ENCODE measurements at regions of chr18 and their contacts with region 1.

Region 1: GRCh38 chr18:6920099-6920899 is 190.8 kb downstream of the ARHGAP28 start:
- DNase-seq: peak; percentile 60
- ATAC-seq: no peak
- H3K4me3 Mint-ChIP-seq: peak overlapping the region; percentile 15
- H3K27ac Mint-ChIP-seq: peak overlapping the region; percentile 22
- H3K4me1 Mint-ChIP-seq: no peaks in the 10 kb centered on the region
- H3K27me3 Mint-ChIP-seq: peaks cover 2% of the 10 kb centered on the region
- CTCF ChIP-seq: peak; percentile 43

Region 2: DNA sequence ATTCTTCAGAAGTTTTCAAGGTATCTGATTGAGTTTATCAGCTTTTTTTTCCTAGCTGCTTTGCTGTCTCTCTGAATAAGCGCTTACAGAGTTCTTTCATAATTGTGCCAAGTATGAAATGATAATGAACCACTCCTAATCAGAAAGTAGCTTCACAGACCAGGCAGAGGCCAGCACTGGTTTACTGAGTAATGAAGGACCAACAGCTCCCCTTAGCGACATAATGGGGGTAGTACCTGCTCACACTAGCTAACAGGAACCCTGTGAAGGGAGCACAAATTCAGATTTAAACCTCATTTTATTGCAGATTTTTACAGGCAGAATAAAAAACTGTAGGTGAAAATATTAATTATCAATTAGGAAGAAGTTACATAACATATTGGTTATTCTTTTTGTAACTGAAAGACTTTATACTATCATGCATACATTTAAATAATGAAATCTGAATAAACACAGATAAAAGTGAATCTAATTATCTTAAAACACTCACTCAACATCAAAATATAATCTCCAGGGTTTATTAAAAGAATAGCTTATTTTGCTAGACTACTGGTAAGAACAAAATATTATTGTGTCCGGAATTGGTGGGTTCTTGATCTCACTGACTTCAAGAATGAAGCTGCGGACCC is 256.9 kb after region 1 on chr18:
- CTCF ChIA-PET with region 1: interaction called, 9 read pairs
- POLR2A ChIA-PET with region 1: no interaction called
- intact Hi-C with region 1: loop called (anchors 5 kb)
- DNase-seq: peak; percentile 40
- ATAC-seq: no peak
- H3K4me3 Mint-ChIP-seq: no peak overlapping the region
- H3K27ac Mint-ChIP-seq: no peak overlapping the region
- H3K4me1 Mint-ChIP-seq: no peaks in the 10 kb centered on the region
- H3K27me3 Mint-ChIP-seq: no peaks in the 10 kb centered on the region
- CTCF ChIP-seq: peak; percentile 38